MCF 10A (cell line): ENCODE measurements at regions of chr3 and their contacts with region 1.

Region 1: GRCh38 chr3:148075763-148076716 is 621.7 kb upstream of the AGTR1 start:
- DNase-seq: peak; percentile 48
- H3K4me3 Mint-ChIP-seq: no peak overlapping the region
- H3K27ac Mint-ChIP-seq: no peak overlapping the region
- H3K4me1 Mint-ChIP-seq: no peaks in the 10 kb centered on the region
- H3K27me3 Mint-ChIP-seq: peaks cover 24% of the 10 kb centered on the region
- CTCF ChIP-seq: peak; percentile 64

Region 2: GRCh38 chr3:146817704-146818103 is 1258.3 kb before region 1 on chr3:
- CTCF ChIA-PET with region 1: no interaction called
- POLR2A ChIA-PET with region 1: no interaction called
- intact Hi-C with region 1: loop called (anchors 5 kb)
- DNase-seq: peak; percentile 15
- H3K4me3 Mint-ChIP-seq: no peak overlapping the region
- H3K27ac Mint-ChIP-seq: no peak overlapping the region
- H3K4me1 Mint-ChIP-seq: no peaks in the 10 kb centered on the region
- H3K27me3 Mint-ChIP-seq: peaks cover 95% of the 10 kb centered on the region
- CTCF ChIP-seq: peak; percentile 31

Region 3: DNA sequence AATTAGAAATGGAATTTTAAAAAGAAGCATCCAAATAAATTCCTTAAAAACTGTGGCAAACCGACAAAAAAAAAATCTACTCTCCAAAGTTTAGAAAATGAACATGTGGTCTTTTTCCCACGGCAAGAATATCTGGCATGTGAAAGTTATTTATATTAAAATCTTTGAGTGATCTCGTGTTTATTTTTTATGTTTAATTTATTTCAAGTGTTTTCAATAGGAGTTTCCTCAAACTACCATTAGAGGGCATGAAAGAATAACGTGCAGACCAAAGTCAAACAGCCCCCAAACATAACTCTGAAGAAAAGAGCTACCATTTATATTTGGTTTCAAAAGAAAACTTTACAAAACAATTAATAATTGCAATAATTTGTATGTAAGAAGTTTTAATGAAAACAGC is 956.1 kb before region 1 on chr3:
- CTCF ChIA-PET with region 1: no interaction called
- POLR2A ChIA-PET with region 1: no interaction called
- intact Hi-C with region 1: loop called (anchors 10 kb)
- DNase-seq: peak; percentile 6
- H3K4me3 Mint-ChIP-seq: no peak overlapping the region
- H3K27ac Mint-ChIP-seq: no peak overlapping the region
- H3K4me1 Mint-ChIP-seq: no peaks in the 10 kb centered on the region
- H3K27me3 Mint-ChIP-seq: peaks cover 14% of the 10 kb centered on the region
- CTCF ChIP-seq: peak; percentile 36

Region 4: DNA sequence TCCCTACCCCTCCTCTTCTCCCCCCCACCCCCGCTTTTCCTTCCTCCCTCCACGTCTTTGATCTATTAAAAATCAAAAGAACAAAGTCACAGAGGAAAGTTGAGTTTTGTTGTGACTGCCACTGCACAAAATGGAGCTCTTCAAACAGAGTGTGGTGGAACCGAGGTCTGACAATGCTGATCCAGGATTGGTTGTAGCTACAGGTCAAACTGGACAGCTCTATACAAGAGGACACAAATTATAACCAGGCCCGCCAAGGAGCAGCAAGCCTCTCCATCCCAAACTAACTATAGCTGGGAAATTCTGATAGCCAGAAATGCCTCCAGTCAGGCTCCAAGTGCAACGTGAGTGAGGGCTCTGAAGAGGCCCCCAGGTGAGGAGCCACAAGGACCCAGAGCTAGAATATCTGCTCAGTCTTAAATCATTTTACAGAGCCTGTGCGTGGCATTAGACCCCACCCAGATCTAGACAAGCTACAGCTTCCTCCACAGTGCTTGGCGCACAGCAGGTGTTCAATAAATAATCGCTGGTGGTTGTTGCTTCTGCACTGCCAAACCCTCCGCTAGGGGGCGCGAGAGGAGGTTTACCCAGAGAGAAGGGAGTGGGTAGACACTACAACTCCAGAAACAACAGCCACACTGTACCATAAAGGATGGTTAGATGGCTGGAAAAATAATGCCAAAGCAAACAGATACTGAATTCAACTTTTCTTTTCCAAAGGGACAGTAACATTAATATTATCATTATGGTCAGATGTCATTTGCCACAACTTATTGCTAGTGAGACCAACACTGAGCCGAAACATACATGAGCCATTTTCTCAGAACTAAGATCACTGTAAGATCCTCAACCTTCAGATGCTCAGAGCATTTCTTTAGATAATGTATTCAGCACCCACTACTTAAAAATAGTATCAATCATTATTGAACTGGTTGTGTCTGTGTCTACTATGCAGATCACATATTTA is 714.3 kb before region 1 on chr3:
- CTCF ChIA-PET with region 1: no interaction called
- POLR2A ChIA-PET with region 1: no interaction called
- intact Hi-C with region 1: loop called (anchors 5 kb)
- DNase-seq: peak; percentile 68
- H3K4me3 Mint-ChIP-seq: no peak overlapping the region
- H3K27ac Mint-ChIP-seq: no peak overlapping the region
- H3K4me1 Mint-ChIP-seq: no peaks in the 10 kb centered on the region
- H3K27me3 Mint-ChIP-seq: peaks cover 87% of the 10 kb centered on the region
- CTCF ChIP-seq: peak; percentile 47

Region 5: DNA sequence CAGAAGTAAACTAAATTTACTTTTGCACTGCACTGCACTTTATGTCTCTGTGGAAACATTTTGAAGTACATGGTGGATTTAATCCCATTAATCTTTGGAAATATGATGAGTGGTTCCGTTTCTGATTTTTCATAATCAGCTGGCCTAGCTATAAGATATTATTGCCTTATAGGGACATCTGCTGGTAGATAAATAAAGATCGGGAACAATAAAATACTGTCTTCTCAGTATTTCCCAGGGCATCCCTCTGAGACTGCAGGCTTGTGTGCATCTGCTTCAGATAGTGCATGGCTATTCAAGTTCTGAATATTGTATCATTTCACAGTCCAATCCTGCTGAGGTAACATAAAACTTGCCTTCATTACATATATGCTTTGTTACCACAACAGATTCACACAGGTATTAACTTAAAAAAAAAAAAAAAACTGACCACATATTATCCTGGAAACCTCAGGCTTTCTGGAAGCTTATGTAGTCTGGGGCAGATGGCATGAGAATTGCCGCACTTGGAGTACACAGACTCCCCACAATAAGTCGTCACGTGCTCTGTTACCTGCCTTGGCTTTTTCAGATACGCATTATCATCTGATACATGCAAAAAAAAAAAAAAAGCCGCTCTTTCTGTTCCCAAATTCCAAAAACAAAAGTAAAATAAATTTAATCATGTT is 290.8 kb after region 1 on chr3:
- CTCF ChIA-PET with region 1: no interaction called
- POLR2A ChIA-PET with region 1: no interaction called
- intact Hi-C with region 1: loop called (anchors 5 kb)
- DNase-seq: peak; percentile 25
- H3K4me3 Mint-ChIP-seq: no peak overlapping the region
- H3K27ac Mint-ChIP-seq: no peak overlapping the region
- H3K4me1 Mint-ChIP-seq: no peaks in the 10 kb centered on the region
- H3K27me3 Mint-ChIP-seq: peaks cover 95% of the 10 kb centered on the region
- CTCF ChIP-seq: peak; percentile 17